K562 (cell line): ENCODE measurements at regions of chr7 and their contacts with region 1.

Region 1: DNA sequence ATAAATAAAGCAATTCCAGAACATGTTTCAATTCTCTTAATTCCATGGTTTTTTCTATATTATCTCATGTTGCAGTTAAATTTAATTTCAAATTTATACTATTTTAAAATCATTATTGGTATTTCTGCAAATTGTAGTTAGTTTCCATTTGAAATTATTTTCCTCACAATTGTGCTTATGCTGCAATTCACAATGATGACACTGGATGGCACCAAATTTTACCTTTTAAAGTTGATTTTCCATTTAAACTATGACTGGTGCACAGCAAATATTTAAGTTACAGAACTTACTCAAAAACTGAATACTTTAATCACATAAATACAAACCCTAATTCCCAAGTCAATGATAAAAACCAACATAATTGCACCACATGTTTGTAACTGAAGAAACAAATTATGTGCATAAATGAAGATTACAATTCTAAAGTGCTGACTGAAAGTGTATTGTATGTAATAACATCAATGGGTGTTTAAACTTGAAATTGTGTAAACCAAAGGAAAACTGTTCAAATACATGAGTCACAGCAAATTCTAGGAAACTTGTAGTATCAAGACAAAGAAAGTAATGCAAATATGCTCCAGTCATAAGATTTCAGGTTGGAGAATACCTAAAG is 75.3 kb upstream of the AASS start:
- DNase-seq: peak in 2 of 4 experiments; percentile 12 to 23
- ATAC-seq: no peak
- H3K4me3 ChIP-seq: no peak overlapping the region
- H3K27ac ChIP-seq: no peak overlapping the region
- H3K4me1 ChIP-seq: no peaks in the 10 kb centered on the region
- H3K27me3 ChIP-seq: no peaks in the 10 kb centered on the region
- CTCF ChIP-seq: peak; percentile 23 to 70 (median 40); a peak in 4 of 6 replicates
- EP300 ChIP-seq: no peak
- POLR2A ChIP-seq: no peak
- RAD21 ChIP-seq: peak; percentile 79 to 81

Region 2: GRCh38 chr7:122206985-122207384 is 12.4 kb before region 1 on chr7:
- CTCF ChIA-PET with region 1: no interaction called
- POLR2A ChIA-PET with region 1: no interaction called
- in situ Hi-C with region 1: no loop called
- intact Hi-C with region 1: no loop called
- DNase-seq: no peak
- ATAC-seq: no peak
- H3K4me3 ChIP-seq: no peak overlapping the region
- H3K27ac ChIP-seq: no peak overlapping the region
- H3K4me1 ChIP-seq: no peaks in the 10 kb centered on the region
- H3K27me3 ChIP-seq: no peaks in the 10 kb centered on the region
- CTCF ChIP-seq: no peak
- EP300 ChIP-seq: no peak
- POLR2A ChIP-seq: no peak
- RAD21 ChIP-seq: no peak

Region 3: DNA sequence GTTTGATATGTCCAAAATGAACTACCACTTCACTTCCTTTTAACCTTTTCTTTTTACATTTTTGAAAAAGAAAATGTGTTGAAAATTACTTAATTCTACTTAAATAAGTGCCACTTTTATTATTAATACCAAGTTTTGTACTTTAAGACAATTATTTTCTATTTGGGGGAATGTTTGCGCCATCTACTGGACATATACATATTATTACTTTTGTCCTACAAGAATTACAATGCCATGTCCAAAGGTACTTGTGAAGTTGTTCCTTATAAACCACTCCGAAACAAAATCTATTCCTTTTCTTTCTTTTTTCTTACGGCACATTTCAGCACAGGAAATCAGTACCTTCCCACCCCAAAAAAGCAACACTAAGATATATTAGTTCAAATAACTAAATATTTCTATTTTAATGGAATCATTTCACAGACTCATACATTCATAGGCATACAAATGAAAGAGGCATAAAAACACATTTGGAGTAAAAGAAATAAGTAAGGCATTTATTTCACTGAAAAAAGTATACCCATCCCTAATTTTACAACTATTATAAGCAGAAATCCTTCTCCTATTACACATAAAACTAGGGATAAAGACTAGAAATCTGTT is 309.6 kb after region 1 on chr7:
- CTCF ChIA-PET with region 1: interaction called, 7 read pairs
- POLR2A ChIA-PET with region 1: no interaction called
- in situ Hi-C with region 1: no loop called
- intact Hi-C with region 1: loop called (anchors 1 kb)
- DNase-seq: peak; percentile 24 to 45 (median 33)
- ATAC-seq: 0 out of 3 replicates have a peak, but pooled peaks have one; percentile 36
- H3K4me3 ChIP-seq: no peak overlapping the region
- H3K27ac ChIP-seq: no peak overlapping the region
- H3K4me1 ChIP-seq: no peaks in the 10 kb centered on the region
- H3K27me3 ChIP-seq: no peaks in the 10 kb centered on the region
- CTCF ChIP-seq: peak in 2 of 3 experiments; percentile 7 to 55; a peak in 3 of 6 replicates
- EP300 ChIP-seq: no peak
- POLR2A ChIP-seq: no peak
- RAD21 ChIP-seq: peak; percentile 48 to 59

Region 4: DNA sequence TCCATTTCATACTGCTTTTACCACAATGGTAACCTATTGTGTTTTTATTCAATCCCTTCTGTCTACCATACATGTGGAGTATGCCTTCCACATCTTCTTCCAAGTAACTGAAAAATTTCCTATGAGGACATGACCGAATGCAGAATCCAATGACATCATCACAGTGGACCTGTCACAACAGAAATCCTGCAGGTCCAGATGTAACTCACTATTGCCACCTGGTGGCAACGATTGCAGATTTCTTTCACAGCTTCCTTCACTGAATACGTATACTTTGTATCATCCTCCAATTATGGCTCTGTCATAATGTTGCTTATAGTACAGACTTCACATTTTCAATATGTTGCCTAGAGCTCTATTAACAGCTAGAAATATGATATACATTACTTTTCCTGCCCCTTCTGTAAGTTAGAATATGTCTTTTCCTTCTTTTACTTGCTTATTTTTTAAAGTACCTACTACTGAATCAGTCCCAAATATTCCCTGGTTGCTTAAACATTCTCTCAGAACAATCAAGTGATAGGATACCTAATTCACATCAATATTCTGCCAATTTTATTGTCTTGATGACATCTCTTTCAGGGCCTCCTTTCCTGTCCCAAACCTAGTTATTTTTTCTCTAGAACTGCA is 935.0 kb after region 1 on chr7:
- CTCF ChIA-PET with region 1: no interaction called
- POLR2A ChIA-PET with region 1: no interaction called
- in situ Hi-C with region 1: no loop called
- intact Hi-C with region 1: loop called (anchors 2 kb)
- DNase-seq: peak; percentile 56 to 81 (median 66)
- ATAC-seq: peak; percentile 91
- H3K4me3 ChIP-seq: no peak overlapping the region
- H3K27ac ChIP-seq: no peak overlapping the region
- H3K4me1 ChIP-seq: no peaks in the 10 kb centered on the region
- H3K27me3 ChIP-seq: no peaks in the 10 kb centered on the region
- CTCF ChIP-seq: peak; percentile 50 to 77 (median 72)
- EP300 ChIP-seq: no peak
- POLR2A ChIP-seq: no peak
- RAD21 ChIP-seq: peak; percentile 80 to 86

Region 5: DNA sequence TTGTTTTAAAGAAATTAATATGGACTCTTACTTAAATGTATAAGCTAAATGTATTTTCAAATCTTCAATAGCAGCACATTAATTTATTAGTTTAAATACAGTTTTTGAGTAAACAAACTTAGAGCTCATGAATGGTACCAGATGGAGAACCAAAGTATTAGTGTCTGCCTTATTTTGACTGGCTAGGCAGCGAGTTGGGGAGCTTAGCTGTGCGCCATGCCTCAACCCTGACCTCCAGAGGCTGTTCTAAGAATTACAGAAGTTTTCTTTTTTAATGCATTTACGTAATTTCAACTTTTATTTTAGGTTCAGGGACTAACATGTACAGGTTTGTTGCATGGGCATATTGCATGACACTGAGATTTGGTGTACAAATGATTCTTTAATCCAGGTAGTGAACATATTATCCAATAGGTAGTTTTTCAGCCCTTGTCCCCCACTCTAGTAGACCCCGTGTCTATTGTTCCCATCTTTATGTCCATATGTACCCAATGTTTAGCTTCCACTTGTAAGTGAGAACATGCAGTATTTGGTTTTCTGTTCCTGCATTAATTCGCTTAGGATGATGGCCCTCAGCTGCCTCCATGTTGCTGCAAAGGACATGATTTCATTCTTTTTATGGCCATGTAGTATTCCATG is 1148.2 kb after region 1 on chr7:
- CTCF ChIA-PET with region 1: no interaction called
- POLR2A ChIA-PET with region 1: no interaction called
- in situ Hi-C with region 1: no loop called
- intact Hi-C with region 1: loop called (anchors 1 kb)
- DNase-seq: peak; percentile 49 to 55 (median 54)
- ATAC-seq: peak; percentile 88
- H3K4me3 ChIP-seq: no peak overlapping the region
- H3K27ac ChIP-seq: no peak overlapping the region
- H3K4me1 ChIP-seq: no peaks in the 10 kb centered on the region
- H3K27me3 ChIP-seq: no peaks in the 10 kb centered on the region
- CTCF ChIP-seq: peak; percentile 56 to 77 (median 71)
- EP300 ChIP-seq: no peak
- POLR2A ChIP-seq: no peak
- RAD21 ChIP-seq: peak; percentile 58 to 74

Region 6: GRCh38 chr7:123871998-123872867 is 1652.9 kb after region 1 on chr7:
- CTCF ChIA-PET with region 1: interaction called, 3 read pairs
- POLR2A ChIA-PET with region 1: no interaction called
- in situ Hi-C with region 1: no loop called
- intact Hi-C with region 1: loop called (anchors 5 kb)
- DNase-seq: peak in 2 of 4 experiments; percentile 45 to 67
- ATAC-seq: peak; percentile 95
- H3K4me3 ChIP-seq: no peak overlapping the region
- H3K27ac ChIP-seq: no peak overlapping the region
- H3K4me1 ChIP-seq: no peaks in the 10 kb centered on the region
- H3K27me3 ChIP-seq: peaks cover 0 to 9% of the 10 kb centered on the region in 2 experiments; a peak in 1 of 5 replicates
- CTCF ChIP-seq: peak; percentile 62 to 82 (median 79)
- EP300 ChIP-seq: no peak
- POLR2A ChIP-seq: no peak
- RAD21 ChIP-seq: peak; percentile 89 to 94